Thyroid gland (tissue), 4 donors: ENCODE measurements at regions of chr4 and their contacts with region 1.

Region 1: DNA sequence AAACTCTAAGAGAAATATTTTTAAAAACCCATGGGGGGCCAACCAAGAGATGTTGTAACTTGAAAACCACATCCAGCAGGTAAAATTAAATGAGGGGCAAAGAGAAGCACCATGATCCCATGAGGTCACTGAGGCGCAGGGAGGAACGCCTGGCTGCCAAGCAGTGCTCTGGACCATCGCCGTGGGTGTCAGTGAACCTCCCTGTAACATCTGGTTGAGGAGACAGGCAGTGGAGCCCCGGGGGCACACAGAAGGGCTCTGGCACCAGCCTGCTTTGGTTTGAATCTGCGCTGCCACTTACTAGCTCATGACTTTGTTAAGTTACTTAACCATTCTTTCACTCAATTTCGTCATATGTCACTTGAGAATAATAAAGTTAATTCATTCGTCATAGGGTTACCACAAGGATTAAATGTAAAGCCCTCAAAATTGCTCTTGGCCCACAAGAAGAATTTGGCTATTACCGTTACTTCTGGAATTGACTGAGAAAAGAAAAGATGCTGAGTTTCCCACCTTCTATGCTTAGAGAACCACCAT is 41.6 kb upstream of the SLC25A4 start:
- DNase-seq: no peak
- H3K4me3 ChIP-seq: no peak overlapping the region
- H3K27ac ChIP-seq: no peak overlapping the region
- H3K4me1 ChIP-seq: no peaks in the 10 kb centered on the region
- H3K27me3 ChIP-seq: no peaks in the 10 kb centered on the region
- CTCF ChIP-seq: no peak
- POLR2A ChIP-seq: no peak

Region 2: GRCh38 chr4:184896868-184897715 is 204.3 kb before region 1 on chr4:
- intact Hi-C with region 1: no loop called
- DNase-seq: no peak
- H3K4me3 ChIP-seq: no peak overlapping the region
- H3K27ac ChIP-seq: no peak overlapping the region
- H3K4me1 ChIP-seq: peaks cover 0 to 5% of the 10 kb centered on the region in 2 donors
- H3K27me3 ChIP-seq: no peaks in the 10 kb centered on the region
- CTCF ChIP-seq: no peak
- POLR2A ChIP-seq: no peak

Region 3: GRCh38 chr4:185039508-185040273 is 61.7 kb before region 1 on chr4:
- intact Hi-C with region 1: loop called (anchors 5 kb)
- DNase-seq: peak; percentile 50 to 56
- H3K4me3 ChIP-seq: no peak overlapping the region
- H3K27ac ChIP-seq: no peak overlapping the region
- H3K4me1 ChIP-seq: peaks cover 0 to 5% of the 10 kb centered on the region in 2 donors
- H3K27me3 ChIP-seq: no peaks in the 10 kb centered on the region
- CTCF ChIP-seq: peak; percentile 55 to 91 (median 84)
- POLR2A ChIP-seq: no peak